Natural killer cell (primary cell): ENCODE measurements at regions of chr12 and their contacts with region 1.

Region 1: DNA sequence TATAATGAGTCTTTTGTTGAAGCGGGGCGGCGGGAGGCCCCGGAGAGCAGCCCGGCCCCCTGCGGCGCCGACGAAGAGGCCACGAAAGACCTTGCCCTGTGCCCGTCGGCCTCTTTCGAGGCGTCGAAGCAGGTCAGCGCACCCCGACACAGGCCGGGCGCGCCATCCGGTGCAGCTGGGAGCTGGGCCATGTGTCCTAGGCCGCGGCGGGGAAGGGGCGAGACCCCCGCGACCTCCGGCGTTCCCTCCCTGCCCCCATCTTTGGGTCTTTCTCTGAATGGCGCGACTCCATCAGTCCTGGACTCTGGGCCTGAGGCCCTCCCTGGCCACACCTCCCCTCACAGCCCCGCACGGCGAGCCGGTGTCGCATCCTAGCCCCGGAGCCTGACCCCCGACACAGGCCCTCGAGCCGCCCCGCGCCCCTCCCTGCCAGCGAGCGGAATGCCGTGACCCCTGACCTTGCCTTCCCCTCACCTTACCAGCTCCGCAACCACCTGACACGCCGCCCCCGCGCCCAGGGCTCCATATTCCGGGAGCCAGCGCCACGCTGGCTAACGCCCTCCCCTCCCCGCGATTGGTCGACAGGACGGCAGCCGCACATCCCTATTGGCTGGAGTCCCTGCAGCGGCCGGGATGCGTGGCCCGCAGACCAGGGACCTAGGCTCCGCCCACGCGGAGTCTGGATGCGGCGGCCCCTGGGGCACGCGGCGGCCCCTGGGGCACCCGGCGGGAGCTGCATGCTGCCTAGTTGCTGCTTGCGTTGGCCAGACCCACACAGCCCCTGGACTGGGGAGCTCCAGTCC is at the start of gene SLC11A2:
- DNase-seq: peak; percentile 82 to 95
- ATAC-seq: peak; percentile 94 to 98 (median 95)
- H3K4me3 ChIP-seq: peak within 1 kb of the TSS; percentile 75
- H3K4me3 Mint-ChIP-seq: peak within 1 kb of the TSS; percentile 98
- H3K27ac ChIP-seq: peak within 1 kb of the TSS; percentile 56
- H3K27ac Mint-ChIP-seq: peak within 1 kb of the TSS; percentile 88 to 97
- H3K4me1 ChIP-seq: peaks cover 30% of the 10 kb centered on the region
- H3K4me1 Mint-ChIP-seq: peaks cover 37 to 45% of the 10 kb centered on the region in 2 donors
- H3K27me3 ChIP-seq: no peaks in the 10 kb centered on the region
- H3K27me3 Mint-ChIP-seq: peaks cover 0 to 4% of the 10 kb centered on the region in 2 donors
- CTCF ChIP-seq: no peak
- total RNA-seq, gene SLC11A2: 34.3 to 54.3 (median 42.7) TPM

Region 2: GRCh38 chr12:50825372-50825838 is 200.6 kb before region 1 on chr12:
- intact Hi-C with region 1: loop called (anchors 5 kb)
- DNase-seq: peak in 1 of 2 donors; percentile 79
- ATAC-seq: peak; percentile 74 to 91 (median 87)
- H3K4me3 ChIP-seq: no peak overlapping the region
- H3K4me3 Mint-ChIP-seq: no peak overlapping the region
- H3K27ac ChIP-seq: peak overlapping the region; percentile 32
- H3K27ac Mint-ChIP-seq: peak overlapping the region; percentile 89 to 93
- H3K4me1 ChIP-seq: no peaks in the 10 kb centered on the region
- H3K4me1 Mint-ChIP-seq: peaks cover 6% of the 10 kb centered on the region in 2 donors
- H3K27me3 ChIP-seq: no peaks in the 10 kb centered on the region
- H3K27me3 Mint-ChIP-seq: no peaks in the 10 kb centered on the region
- CTCF ChIP-seq: peak; percentile 71

Region 3: GRCh38 chr12:50924439-50925341 is 101.3 kb before region 1 on chr12:
- intact Hi-C with region 1: loop called (anchors 10 kb)
- DNase-seq: peak; percentile 44 to 63
- ATAC-seq: peak; percentile 91 to 93 (median 91)
- H3K4me3 ChIP-seq: peak overlapping the region; percentile 53
- H3K4me3 Mint-ChIP-seq: peak overlapping the region; percentile 96
- H3K27ac ChIP-seq: peak overlapping the region; percentile 72
- H3K27ac Mint-ChIP-seq: peak overlapping the region; percentile 92 to 95
- H3K4me1 ChIP-seq: peaks cover 32% of the 10 kb centered on the region
- H3K4me1 Mint-ChIP-seq: peaks cover 65 to 69% of the 10 kb centered on the region in 2 donors
- H3K27me3 ChIP-seq: no peaks in the 10 kb centered on the region
- H3K27me3 Mint-ChIP-seq: no peaks in the 10 kb centered on the region
- CTCF ChIP-seq: no peak

Region 4: GRCh38 chr12:51047655-51048540 is 21.9 kb after region 1 on chr12 and contains the start of gene LETMD1:
- intact Hi-C with region 1: loop called (anchors 1 kb)
- DNase-seq: peak; percentile 84 to 98
- ATAC-seq: peak; percentile 93 to 98 (median 94)
- H3K4me3 ChIP-seq: peak within 1 kb of the TSS; percentile 63
- H3K4me3 Mint-ChIP-seq: peak within 1 kb of the TSS; percentile 91
- H3K27ac ChIP-seq: peak within 1 kb of the TSS; percentile 83
- H3K27ac Mint-ChIP-seq: peak within 1 kb of the TSS; percentile 90 to 96
- H3K4me1 ChIP-seq: peaks cover 19% of the 10 kb centered on the region
- H3K4me1 Mint-ChIP-seq: peaks cover 26 to 37% of the 10 kb centered on the region in 2 donors
- H3K27me3 ChIP-seq: no peaks in the 10 kb centered on the region
- H3K27me3 Mint-ChIP-seq: no peaks in the 10 kb centered on the region
- CTCF ChIP-seq: peak; percentile 95
- total RNA-seq, gene LETMD1: 57.1 to 71.8 (median 58.2) TPM

Region 5: GRCh38 chr12:51070004-51070403 is 44.0 kb after region 1 on chr12:
- intact Hi-C with region 1: no loop called
- DNase-seq: no peak
- ATAC-seq: no peak
- H3K4me3 ChIP-seq: no peak overlapping the region
- H3K4me3 Mint-ChIP-seq: no peak overlapping the region
- H3K27ac ChIP-seq: no peak overlapping the region
- H3K27ac Mint-ChIP-seq: no peak overlapping the region
- H3K4me1 ChIP-seq: no peaks in the 10 kb centered on the region
- H3K4me1 Mint-ChIP-seq: no peaks in the 10 kb centered on the region
- H3K27me3 ChIP-seq: no peaks in the 10 kb centered on the region
- H3K27me3 Mint-ChIP-seq: no peaks in the 10 kb centered on the region
- CTCF ChIP-seq: no peak